ENCODE measurements at regions of chr11 and their contacts with region 1.

Region 1: DNA sequence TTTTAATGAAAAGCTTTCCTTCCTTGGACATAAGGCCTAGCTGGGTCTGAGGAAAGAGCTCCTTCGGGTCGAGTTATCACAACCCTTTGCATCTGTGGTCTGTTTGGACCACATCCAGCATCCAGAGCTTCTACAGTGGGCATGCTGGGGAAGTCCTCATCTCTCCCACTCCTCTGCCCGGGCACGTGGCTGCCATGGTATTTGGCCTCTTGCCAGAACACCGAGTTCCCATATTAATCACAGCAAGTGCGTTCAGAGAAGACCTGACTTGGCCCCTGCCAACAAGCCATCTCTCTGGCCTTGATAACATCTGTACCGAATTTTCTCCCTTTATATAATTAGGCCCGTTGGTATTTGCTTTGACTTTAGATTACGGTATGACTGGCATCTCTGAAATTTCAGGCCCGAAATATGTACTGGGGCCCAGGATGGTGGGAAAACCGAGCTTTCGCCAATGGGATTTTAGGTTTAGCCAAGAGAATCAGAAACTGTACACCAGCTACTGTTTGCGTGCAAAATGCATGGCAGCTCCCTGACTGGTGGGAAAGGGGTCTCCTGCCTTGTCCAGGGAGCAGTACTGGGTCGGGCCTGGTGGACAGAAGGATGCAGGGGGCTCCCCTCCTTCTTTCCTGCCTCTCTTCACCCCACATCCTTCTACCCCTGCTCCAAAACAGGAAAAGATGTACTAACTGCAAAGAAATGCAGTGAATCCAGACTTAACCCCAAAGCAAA is 90.1 kb downstream of the MICAL2 start:
- DNase-seq: no peak
- H3K4me3 Mint-ChIP-seq: no peak overlapping the region
- H3K27ac Mint-ChIP-seq: peak overlapping the region; percentile 98
- H3K4me1 Mint-ChIP-seq: peaks cover 75% of the 10 kb centered on the region
- H3K27me3 Mint-ChIP-seq: no peaks in the 10 kb centered on the region

Region 2: DNA sequence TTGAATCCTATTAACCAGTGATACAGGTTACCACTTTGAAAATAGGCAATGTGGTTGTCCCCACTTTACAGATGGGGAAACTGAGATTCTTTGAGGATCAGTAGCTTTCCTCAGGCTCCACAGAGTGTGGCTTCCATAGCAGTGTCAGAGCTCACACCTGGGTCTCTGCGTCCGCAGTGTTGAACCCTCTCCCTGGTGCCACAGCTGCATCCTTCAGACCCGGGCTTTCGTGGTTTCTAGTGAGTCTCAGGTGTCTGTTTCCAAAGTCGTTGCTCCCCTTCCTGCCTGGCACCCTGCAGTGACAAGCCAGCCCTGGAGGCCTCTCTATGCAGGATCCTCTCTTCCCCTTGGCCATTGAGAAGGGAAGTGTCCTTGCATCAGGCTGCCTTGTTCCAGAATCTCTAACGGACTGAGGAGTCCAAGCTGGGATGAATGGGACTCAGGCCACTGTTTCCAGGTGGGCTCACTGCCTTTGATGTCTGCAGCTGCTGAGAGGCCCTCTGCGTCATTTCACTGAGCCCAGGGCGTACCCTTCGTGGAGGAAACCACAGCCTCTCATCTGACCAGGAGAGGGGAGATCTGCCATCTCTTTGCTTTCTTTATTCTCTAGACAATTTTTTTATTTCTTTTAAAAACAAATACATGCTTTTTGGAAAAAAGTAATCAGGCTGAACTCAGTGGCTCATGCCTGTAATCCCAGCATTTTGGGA is 138.4 kb before region 1 on chr11:
- CTCF ChIA-PET with region 1: no interaction called
- POLR2A ChIA-PET with region 1: no interaction called
- DNase-seq: no peak
- H3K4me3 Mint-ChIP-seq: no peak overlapping the region
- H3K27ac Mint-ChIP-seq: no peak overlapping the region
- H3K4me1 Mint-ChIP-seq: peaks cover 13% of the 10 kb centered on the region
- H3K27me3 Mint-ChIP-seq: peaks cover 5% of the 10 kb centered on the region

Region 3: GRCh38 chr11:12182676-12183541 is 17.5 kb before region 1 on chr11:
- CTCF ChIA-PET with region 1: interaction called, 6 read pairs
- POLR2A ChIA-PET with region 1: interaction called, 290 read pairs
- DNase-seq: no peak
- H3K4me3 Mint-ChIP-seq: no peak overlapping the region
- H3K27ac Mint-ChIP-seq: no peak overlapping the region
- H3K4me1 Mint-ChIP-seq: peaks cover 48% of the 10 kb centered on the region
- H3K27me3 Mint-ChIP-seq: no peaks in the 10 kb centered on the region

Region 4: DNA sequence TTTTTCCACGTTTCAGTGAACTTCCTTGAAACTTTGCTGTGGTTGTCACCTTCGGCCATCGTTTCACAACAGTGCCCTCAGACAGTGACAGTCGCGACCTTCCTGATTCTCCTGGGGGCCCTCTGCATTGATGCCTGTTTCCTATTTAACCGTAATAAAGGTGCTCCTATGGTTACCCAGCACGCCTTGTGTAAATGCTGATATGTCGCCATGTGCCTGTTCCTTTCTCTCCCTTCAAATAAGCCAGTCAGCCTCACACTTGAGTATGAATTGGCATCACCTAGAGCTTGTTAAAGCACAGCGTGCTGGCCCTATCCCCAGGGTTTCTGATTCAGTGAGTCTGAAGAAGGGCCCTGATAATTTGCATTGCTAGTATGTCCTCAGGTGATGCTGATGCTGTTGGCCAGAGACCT is 14.7 kb after region 1 on chr11:
- CTCF ChIA-PET with region 1: interaction called, 4 read pairs
- POLR2A ChIA-PET with region 1: interaction called, 16 read pairs
- DNase-seq: no peak
- H3K4me3 Mint-ChIP-seq: no peak overlapping the region
- H3K27ac Mint-ChIP-seq: peak overlapping the region; percentile 45
- H3K4me1 Mint-ChIP-seq: peaks cover 17% of the 10 kb centered on the region
- H3K27me3 Mint-ChIP-seq: no peaks in the 10 kb centered on the region

Measured in activated CD4-positive, alpha-beta memory T cell treated with anti-CD3 and anti-CD28 coated beads, Interleukin-2, amount 10 ng/mL, durations not matched to agents 7 days and 5 days (primary cell).